Dorsolateral prefrontal cortex (tissue), 120 donors: ENCODE measurements at regions of chr1 and their contacts with region 1.

Region 1: DNA sequence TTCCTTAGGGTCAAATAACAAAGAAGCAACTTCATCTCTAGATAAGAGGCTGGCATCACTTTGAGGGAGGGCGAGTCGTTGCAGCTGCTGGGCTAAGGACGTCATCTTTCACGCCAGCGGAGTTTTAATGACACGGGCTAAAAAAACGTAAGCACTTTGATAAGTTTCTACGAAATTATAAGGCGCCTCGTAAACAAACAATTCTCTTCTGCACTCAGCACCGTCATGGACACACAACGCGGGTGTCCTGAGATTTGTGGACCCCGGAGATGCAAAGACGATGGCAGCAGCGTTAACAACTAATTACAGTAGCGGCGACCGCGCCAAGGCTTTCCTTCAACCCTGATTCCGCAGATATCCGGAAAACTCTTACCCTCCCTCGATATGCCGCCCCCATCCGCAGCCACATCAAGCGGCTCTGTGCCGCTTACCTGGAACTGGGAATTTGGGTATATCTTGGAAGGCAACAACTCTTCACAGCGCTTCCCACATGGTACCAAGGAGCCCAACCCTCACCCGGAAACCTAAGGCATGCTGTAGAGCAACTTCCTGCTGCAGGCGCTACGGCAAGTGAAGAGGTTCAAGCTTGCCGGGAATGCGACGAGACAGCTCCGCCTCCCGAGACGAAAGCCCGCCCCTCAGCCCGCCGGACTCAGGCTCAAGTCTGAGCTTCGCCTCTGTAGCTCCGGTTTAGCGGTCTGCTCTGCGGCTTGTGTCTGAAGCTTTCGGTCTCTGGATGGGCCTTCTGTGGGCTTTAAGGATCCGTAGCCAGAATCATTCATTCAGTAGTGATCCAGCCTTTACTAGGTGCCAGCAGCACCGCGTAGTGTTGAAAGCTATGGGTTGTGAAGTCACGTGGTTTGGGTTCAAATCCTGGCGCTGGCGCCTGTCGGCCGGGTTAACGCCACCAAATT is at the start of gene HEATR1:
- DNase-seq: peak; percentile 89 to 97 (median 94)
- H3K4me3 ChIP-seq: peak within 1 kb of the TSS; percentile 72 to 99 (median 90)
- H3K27ac ChIP-seq: peak within 1 kb of the TSS in 58 of 59 donors; percentile 19 to 95 (median 85)
- H3K27me3 ChIP-seq: peaks cover 0 to 4% (median 0%) of the 10 kb centered on the region in 45 donors
- CTCF ChIP-seq: peak in 46 of 56 donors; percentile 11 to 69 (median 42)
- total RNA-seq, gene HEATR1: 17.4 to 37.1 (median 25.8) TPM

Region 2: DNA sequence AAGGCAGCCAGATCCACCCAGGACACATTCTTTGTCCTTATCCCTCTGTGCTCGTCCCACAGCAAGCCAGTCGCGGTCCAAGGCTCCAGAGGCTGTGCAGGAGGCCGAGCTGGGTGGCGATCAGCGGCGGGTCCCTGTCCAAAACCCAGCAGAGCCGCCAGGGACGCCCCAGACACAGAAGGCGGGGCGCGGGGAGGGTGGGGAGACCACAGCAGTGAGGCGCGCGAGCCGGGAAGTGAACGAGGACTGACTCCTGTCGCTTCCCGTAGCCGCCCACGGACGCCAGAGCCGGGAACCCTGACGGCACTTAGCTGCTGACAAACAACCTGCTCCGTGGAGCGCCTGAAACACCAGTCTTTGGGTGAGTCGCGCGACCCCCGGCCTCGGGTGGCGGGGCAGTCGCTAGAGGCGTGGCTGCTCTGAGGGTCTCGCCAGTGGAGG is 80.5 kb before region 1 on chr1 and contains the start of gene LGALS8:
- intact Hi-C with region 1: loop called in 1 of 2 experiments (anchors 5 kb)
- DNase-seq: peak; percentile 75 to 94 (median 87)
- H3K4me3 ChIP-seq: peak within 1 kb of the TSS; percentile 66 to 100 (median 95)
- H3K27ac ChIP-seq: peak within 1 kb of the TSS in 58 of 59 donors; percentile 30 to 93 (median 80)
- H3K27me3 ChIP-seq: no peaks in the 10 kb centered on the region
- CTCF ChIP-seq: peak in 13 of 56 donors; percentile 9 to 30 (median 22)
- total RNA-seq, gene LGALS8: 33.6 to 99.3 (median 70.0) TPM

Region 3: GRCh38 chr1:236689713-236690569 is 85.7 kb after region 1 on chr1:
- intact Hi-C with region 1: no loop called
- DNase-seq: peak in 1 of 10 donors; percentile 51
- H3K4me3 ChIP-seq: peak overlapping the region in 2 of 59 donors; percentile 2 to 8
- H3K27ac ChIP-seq: peak overlapping the region in 1 of 59 donors; percentile 23
- H3K27me3 ChIP-seq: peaks cover 0 to 12% (median 0%) of the 10 kb centered on the region in 45 donors
- CTCF ChIP-seq: no peak

Region 4: GRCh38 chr1:236795035-236795756 is 190.9 kb after region 1 on chr1 and contains the start of gene MTR:
- intact Hi-C with region 1: loop called (anchors 1 to 5 kb)
- DNase-seq: peak; percentile 95 to 99 (median 98)
- H3K4me3 ChIP-seq: peak within 1 kb of the TSS; percentile 73 to 100 (median 94)
- H3K27ac ChIP-seq: peak within 1 kb of the TSS in 58 of 59 donors; percentile 20 to 92 (median 78)
- H3K27me3 ChIP-seq: no peaks in the 10 kb centered on the region
- CTCF ChIP-seq: peak in 32 of 56 donors; percentile 1 to 59 (median 26)
- total RNA-seq, gene MTR: 24.7 to 58.2 (median 42.2) TPM

Region 5: DNA sequence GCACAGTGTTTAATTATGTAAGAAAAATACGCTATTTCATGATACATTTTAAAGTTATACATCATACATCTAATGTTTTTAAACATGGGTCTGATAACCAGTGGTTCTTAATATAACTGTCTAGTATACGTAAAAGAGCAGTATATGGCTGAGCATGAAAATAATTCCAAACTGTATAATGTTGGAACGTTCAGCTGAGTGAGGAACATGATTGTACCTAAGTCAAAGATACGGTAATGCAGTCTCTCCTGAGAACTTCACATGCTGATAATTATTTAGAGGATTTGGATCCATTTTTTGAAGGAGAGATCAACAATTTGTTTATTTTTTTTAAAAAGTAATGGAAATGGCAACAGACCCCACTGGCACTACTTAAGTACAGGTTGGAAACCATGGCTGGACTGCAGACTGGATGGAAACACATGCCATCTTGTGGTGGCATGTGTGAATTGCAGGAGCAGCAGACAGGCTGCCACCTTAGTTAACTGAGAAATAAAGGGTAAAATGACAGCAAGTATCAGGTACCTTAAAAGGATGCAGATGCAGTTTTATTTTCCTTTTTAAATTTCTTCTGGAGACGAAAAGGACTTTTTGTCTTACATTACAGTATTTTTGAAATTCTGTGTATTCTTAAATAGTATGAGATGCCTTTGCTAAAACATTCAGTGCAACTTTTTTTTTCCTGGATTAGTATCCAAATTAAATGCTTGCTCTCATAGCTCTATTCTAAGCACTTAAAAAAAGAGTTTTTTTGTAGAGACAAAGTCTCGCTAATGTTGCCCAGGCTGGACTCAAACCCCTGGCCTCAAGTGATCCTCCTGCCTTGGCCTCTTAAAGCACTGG is 264.6 kb after region 1 on chr1:
- intact Hi-C with region 1: loop called in 1 of 2 experiments (anchors 5 kb)
- DNase-seq: no peak
- H3K4me3 ChIP-seq: no peak overlapping the region
- H3K27ac ChIP-seq: no peak overlapping the region
- H3K27me3 ChIP-seq: no peaks in the 10 kb centered on the region
- CTCF ChIP-seq: peak; percentile 40 to 79 (median 62)

Region 6: GRCh38 chr1:237556911-237557310 is 952.7 kb after region 1 on chr1:
- intact Hi-C with region 1: loop called in 1 of 2 experiments (anchors 5 kb)
- DNase-seq: peak in 6 of 10 donors; percentile 14 to 68 (median 48)
- H3K4me3 ChIP-seq: no peak overlapping the region
- H3K27ac ChIP-seq: peak overlapping the region in 1 of 59 donors; percentile 14
- H3K27me3 ChIP-seq: no peaks in the 10 kb centered on the region
- CTCF ChIP-seq: no peak